Transverse colon (tissue), 4 donors: ENCODE measurements at regions of chr13 and their contacts with region 1.

Region 1: GRCh38 chr13:20369886-20370361 is 137.8 kb upstream of the GJB6 start:
- DNase-seq: no peak
- H3K4me3 ChIP-seq: no peak overlapping the region
- H3K27ac ChIP-seq: no peak overlapping the region
- H3K4me1 ChIP-seq: no peaks in the 10 kb centered on the region
- H3K27me3 ChIP-seq: peaks cover 8% of the 10 kb centered on the region
- CTCF ChIP-seq: no peak
- EP300 ChIP-seq: no peak
- POLR2A ChIP-seq: no peak

Region 2: DNA sequence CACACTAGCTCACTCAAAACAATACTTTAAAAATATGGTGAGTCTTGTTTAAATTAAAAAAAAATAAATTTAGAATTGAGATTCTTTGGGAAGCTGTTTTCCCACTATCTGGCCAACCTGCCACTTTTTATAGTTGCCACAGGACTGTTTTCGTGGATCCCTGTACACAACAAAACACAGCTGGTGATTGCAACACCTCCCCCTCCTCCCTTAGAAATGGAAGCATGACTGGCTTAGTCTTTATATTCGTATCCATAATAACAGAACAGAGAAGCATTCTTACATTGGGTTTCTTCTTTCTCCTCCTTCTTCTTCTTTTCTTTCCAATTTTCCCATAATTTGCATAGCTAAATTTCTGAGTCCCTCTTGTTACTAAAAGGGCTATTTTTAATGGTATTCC is 58.3 kb before region 1 on chr13:
- in situ Hi-C with region 1: loop called in 1 of 4 experiments (anchors 10 kb)
- intact Hi-C with region 1: no loop called
- DNase-seq: no peak
- H3K4me3 ChIP-seq: no peak overlapping the region
- H3K27ac ChIP-seq: no peak overlapping the region
- H3K4me1 ChIP-seq: no peaks in the 10 kb centered on the region
- H3K27me3 ChIP-seq: no peaks in the 10 kb centered on the region
- CTCF ChIP-seq: no peak
- EP300 ChIP-seq: no peak
- POLR2A ChIP-seq: no peak

Region 3: DNA sequence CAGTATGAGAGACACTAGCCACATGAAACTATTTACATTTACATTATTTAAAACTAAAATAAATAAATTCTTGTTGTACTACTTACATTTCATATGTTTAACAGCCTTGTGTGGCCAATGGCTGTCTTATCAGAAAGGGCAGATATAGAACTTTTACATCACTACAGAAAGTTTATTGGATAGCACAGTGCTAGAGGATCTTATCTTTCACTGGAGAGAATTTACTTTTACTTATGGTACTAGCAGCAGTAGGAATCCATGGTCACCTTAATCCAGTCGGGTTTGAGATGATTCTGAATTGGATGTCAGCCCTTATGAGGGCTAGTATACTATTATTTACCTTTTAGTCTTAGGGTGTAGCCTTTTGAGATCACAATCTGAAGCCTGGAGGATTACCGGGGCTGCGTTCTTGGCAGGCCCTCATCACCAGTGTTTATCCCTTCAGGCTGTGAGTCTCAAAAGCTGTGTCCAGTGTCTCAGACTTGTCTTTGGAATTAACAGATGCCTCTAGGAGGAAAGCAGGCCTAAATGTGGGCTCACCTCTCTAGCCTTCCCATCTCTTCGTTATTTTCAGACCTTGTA is 218.7 kb after region 1 on chr13:
- in situ Hi-C with region 1: no loop called
- intact Hi-C with region 1: no loop called
- DNase-seq: no peak
- H3K4me3 ChIP-seq: no peak overlapping the region
- H3K27ac ChIP-seq: peak overlapping the region; percentile 4 to 32 (median 24)
- H3K4me1 ChIP-seq: peaks cover 0 to 34% (median 17%) of the 10 kb centered on the region in 4 donors
- H3K27me3 ChIP-seq: no peaks in the 10 kb centered on the region
- CTCF ChIP-seq: no peak
- EP300 ChIP-seq: no peak
- POLR2A ChIP-seq: no peak